Naive thymus-derived CD4-positive, alpha-beta T cell (primary cell): ENCODE measurements at regions of chr3 and their contacts with region 1.

Region 1: DNA sequence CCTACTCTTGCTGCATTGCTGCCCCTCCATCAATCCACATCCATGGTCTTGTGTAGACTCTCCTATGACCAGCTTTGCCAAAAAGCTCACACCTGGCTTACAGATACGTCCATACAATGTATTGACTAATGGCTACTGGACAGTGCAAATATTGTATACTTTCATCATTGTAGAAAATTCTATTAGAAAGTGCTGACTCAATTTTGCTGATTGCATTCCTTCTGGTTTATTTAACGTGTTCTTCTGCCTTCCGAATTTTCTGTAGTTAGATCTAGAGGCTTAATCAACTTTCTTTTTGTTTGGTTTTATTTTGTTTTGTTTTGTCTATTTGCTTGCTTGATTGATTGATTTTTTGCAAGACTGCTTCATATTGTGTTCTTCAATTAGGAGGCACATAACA is 29.8 kb upstream of the CNOT10 start:
- DNase-seq: no peak
- ATAC-seq: no peak
- H3K4me3 ChIP-seq: no peak overlapping the region
- H3K4me3 Mint-ChIP-seq: no peak overlapping the region
- H3K27ac ChIP-seq: no peak overlapping the region
- H3K27ac Mint-ChIP-seq: no peak overlapping the region
- H3K4me1 ChIP-seq: no peaks in the 10 kb centered on the region
- H3K4me1 Mint-ChIP-seq: no peaks in the 10 kb centered on the region
- H3K27me3 ChIP-seq: no peaks in the 10 kb centered on the region
- H3K27me3 Mint-ChIP-seq: peaks cover 0 to 22% (median 17%) of the 10 kb centered on the region in 5 donors

Region 2: GRCh38 chr3:32614956-32615355 is 40.2 kb before region 1 on chr3:
- CTCF ChIA-PET with region 1: interaction called, 10 read pairs
- POLR2A ChIA-PET with region 1: no interaction called
- intact Hi-C with region 1: no loop called
- DNase-seq: no peak
- ATAC-seq: no peak
- H3K4me3 ChIP-seq: no peak overlapping the region
- H3K4me3 Mint-ChIP-seq: no peak overlapping the region
- H3K27ac ChIP-seq: no peak overlapping the region
- H3K27ac Mint-ChIP-seq: no peak overlapping the region
- H3K4me1 ChIP-seq: no peaks in the 10 kb centered on the region
- H3K4me1 Mint-ChIP-seq: no peaks in the 10 kb centered on the region
- H3K27me3 ChIP-seq: peaks cover 0 to 2% of the 10 kb centered on the region in 2 donors
- H3K27me3 Mint-ChIP-seq: peaks cover 0 to 25% (median 17%) of the 10 kb centered on the region in 5 donors